Mammary epithelial cell (primary cell): ENCODE measurements at regions of chr11 and their contacts with region 1.

Region 1: DNA sequence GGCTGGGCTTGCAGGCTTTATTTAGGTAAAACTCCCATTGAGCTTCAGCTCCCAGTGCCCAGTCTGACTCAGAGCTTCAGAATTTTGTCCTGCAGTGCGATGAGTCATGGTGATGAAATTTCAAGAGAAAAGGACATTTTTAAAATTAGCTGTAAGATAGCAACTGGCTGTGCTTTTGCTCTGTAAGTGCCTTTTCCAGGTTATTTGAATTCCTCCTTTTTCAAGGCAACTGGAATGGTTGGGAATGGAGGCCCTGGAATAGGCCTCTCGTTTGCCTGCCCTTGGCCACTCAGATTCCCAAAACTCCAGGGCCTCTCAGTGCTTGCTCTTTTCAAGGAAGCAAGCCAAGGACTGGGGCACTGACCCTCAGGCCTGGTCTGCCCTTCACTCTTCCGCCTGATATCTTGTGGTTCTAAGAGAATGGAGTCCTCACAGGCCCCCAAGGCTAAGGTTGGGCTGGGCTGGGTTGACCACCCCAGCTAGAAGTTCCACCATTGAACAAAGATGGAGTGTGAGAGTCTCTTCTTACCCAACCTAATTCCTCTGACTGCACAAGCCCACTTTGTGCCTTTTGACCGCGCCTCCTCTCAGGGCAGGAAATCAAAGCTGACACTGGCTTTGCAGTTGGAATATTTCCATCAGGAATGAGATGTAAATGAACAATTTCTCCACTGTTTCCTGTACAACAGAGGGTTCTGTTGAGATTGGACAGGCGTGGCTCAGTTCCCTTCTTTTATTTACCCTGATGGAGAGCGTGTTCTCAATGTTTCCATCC is 59.4 kb upstream of the PRSS23 start:
- DNase-seq: peak; percentile 88
- H3K4me3 ChIP-seq: no peak overlapping the region
- H3K27ac ChIP-seq: peak overlapping the region; percentile 85
- H3K4me1 ChIP-seq: peaks cover 65% of the 10 kb centered on the region
- H3K27me3 ChIP-seq: no peaks in the 10 kb centered on the region
- CTCF ChIP-seq: no peak

Region 2: DNA sequence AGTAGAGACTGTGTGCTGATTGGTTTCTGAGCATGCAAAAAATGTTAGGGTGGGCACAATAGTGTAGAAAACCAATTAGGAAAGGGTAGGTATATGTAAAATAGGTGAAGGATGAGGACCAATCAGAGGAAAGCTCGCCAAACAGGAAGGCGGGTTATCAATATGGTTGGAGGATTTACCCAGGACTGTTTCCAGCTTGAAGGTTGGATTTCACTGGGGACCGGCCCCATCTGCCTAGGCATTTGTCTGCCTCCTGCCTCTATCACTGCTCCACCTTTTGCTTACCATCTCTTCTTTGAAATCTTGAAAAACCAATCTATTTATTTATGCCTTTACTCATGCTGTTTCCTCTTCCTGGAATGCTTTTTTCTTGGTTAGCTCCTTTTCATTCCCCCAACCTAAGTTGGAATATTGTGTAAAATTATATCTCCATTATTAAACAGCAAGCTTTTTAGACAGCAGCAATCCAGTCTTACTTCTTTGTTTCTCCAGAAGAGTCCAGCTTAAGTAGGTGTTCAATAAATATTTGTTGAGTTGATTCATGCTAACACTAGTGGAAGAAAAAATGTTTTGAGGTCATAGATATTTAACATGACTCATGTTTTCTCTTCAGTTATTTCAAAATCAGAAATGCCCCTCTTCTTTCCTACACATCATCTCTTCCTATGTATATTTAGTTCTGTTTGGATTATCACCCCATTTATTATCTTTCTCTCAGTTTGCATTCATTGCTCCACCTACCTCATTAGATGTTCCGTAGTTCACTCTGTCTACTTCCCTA is 865.6 kb before region 1 on chr11:
- CTCF ChIA-PET with region 1: no interaction called
- dilution Hi-C with region 1: no loop called
- in situ Hi-C with region 1: no loop called
- intact Hi-C with region 1: no loop called
- DNase-seq: peak; percentile 52
- H3K4me3 ChIP-seq: no peak overlapping the region
- H3K27ac ChIP-seq: no peak overlapping the region
- H3K4me1 ChIP-seq: peaks cover 8% of the 10 kb centered on the region
- H3K27me3 ChIP-seq: no peaks in the 10 kb centered on the region
- CTCF ChIP-seq: no peak

Region 3: DNA sequence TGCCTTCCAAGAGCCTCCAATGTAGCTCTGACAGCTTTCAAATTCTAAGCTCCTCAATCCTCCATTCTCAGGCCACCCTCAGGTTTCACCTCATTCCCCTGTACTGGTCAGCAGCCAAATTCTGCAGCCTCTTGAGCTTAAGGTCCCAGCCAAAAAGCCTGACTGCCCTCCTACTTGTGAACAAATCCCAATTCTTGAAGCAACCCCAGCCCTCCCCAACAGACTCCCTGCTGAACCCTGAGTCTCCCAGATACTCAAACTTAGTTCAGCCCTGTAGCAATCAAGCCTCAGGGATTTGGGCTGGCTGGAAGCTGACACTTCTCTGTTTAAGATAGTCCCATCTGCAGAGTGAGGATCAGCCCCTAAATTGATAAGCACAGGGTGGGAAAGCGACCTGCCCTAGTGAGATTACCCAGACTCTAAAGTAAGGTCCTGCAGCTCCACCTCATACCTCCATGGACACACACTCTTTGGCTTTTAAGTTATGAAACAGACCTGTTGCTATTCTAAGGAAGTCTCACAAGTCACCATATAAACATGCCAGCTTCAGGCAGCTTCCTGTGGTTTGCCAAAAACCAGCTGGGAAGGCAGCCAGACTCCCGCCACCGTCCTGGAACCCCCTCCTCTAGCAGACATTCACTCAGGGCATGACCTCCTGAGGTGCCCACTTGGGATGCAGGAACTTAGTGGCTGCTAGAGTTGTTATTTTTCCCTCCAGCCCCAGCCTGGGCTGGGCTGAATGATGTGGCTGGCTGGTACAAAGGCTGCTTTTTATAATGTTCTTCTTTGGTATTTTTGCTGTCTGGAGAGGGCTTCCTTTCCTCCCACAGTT is 589.5 kb before region 1 on chr11:
- CTCF ChIA-PET with region 1: no interaction called
- dilution Hi-C with region 1: no loop called
- in situ Hi-C with region 1: no loop called
- intact Hi-C with region 1: no loop called
- DNase-seq: no peak
- H3K4me3 ChIP-seq: peak overlapping the region in 1 of 3 experiments; percentile 13
- H3K27ac ChIP-seq: peak overlapping the region; percentile 90
- H3K4me1 ChIP-seq: peaks cover 54% of the 10 kb centered on the region
- H3K27me3 ChIP-seq: no peaks in the 10 kb centered on the region
- CTCF ChIP-seq: no peak

Region 4: GRCh38 chr11:86515297-86516094 is 225.4 kb before region 1 on chr11:
- CTCF ChIA-PET with region 1: no interaction called
- dilution Hi-C with region 1: no loop called
- in situ Hi-C with region 1: no loop called
- intact Hi-C with region 1: loop called (anchors 5 kb)
- DNase-seq: peak; percentile 97
- H3K4me3 ChIP-seq: no peak overlapping the region
- H3K27ac ChIP-seq: peak overlapping the region; percentile 24
- H3K4me1 ChIP-seq: peaks cover 35% of the 10 kb centered on the region
- H3K27me3 ChIP-seq: no peaks in the 10 kb centered on the region
- CTCF ChIP-seq: no peak

Region 5: GRCh38 chr11:86620891-86621521 is 119.9 kb before region 1 on chr11:
- CTCF ChIA-PET with region 1: no interaction called
- dilution Hi-C with region 1: no loop called
- in situ Hi-C with region 1: no loop called
- intact Hi-C with region 1: loop called (anchors 1 kb)
- DNase-seq: no peak
- H3K4me3 ChIP-seq: no peak overlapping the region
- H3K27ac ChIP-seq: no peak overlapping the region
- H3K4me1 ChIP-seq: peaks cover 14% of the 10 kb centered on the region
- H3K27me3 ChIP-seq: no peaks in the 10 kb centered on the region
- CTCF ChIP-seq: no peak

Region 6: DNA sequence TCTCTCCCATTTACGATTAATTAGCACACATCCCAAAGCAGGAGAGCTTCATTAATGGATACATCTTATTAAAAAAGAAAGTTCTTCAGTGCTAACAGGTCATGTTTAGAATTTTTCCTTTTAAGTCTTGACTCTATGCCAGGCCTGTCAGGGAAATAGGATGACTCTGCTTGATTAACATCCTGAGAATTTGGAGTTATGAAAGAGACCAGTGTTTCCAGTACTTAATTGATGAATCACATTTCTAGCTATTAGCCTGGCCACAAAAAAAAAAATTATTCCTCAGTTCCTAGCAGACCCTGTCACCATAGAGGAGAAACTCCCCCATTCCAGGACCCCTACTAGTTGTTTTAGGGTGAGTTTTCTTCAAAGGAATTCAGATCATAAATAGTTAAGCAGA is 44.9 kb before region 1 on chr11:
- CTCF ChIA-PET with region 1: no interaction called
- dilution Hi-C with region 1: no loop called
- in situ Hi-C with region 1: no loop called
- intact Hi-C with region 1: loop called (anchors 1 kb)
- DNase-seq: peak; percentile 86
- H3K4me3 ChIP-seq: no peak overlapping the region
- H3K27ac ChIP-seq: peak overlapping the region; percentile 64
- H3K4me1 ChIP-seq: peaks cover 49% of the 10 kb centered on the region
- H3K27me3 ChIP-seq: no peaks in the 10 kb centered on the region
- CTCF ChIP-seq: no peak

Region 7: GRCh38 chr11:86784241-86784681 is 43.4 kb after region 1 on chr11:
- CTCF ChIA-PET with region 1: no interaction called
- dilution Hi-C with region 1: no loop called
- in situ Hi-C with region 1: no loop called
- intact Hi-C with region 1: loop called (anchors 1 kb)
- DNase-seq: no peak
- H3K4me3 ChIP-seq: no peak overlapping the region
- H3K27ac ChIP-seq: no peak overlapping the region
- H3K4me1 ChIP-seq: no peaks in the 10 kb centered on the region
- H3K27me3 ChIP-seq: no peaks in the 10 kb centered on the region
- CTCF ChIP-seq: no peak

Region 8: DNA sequence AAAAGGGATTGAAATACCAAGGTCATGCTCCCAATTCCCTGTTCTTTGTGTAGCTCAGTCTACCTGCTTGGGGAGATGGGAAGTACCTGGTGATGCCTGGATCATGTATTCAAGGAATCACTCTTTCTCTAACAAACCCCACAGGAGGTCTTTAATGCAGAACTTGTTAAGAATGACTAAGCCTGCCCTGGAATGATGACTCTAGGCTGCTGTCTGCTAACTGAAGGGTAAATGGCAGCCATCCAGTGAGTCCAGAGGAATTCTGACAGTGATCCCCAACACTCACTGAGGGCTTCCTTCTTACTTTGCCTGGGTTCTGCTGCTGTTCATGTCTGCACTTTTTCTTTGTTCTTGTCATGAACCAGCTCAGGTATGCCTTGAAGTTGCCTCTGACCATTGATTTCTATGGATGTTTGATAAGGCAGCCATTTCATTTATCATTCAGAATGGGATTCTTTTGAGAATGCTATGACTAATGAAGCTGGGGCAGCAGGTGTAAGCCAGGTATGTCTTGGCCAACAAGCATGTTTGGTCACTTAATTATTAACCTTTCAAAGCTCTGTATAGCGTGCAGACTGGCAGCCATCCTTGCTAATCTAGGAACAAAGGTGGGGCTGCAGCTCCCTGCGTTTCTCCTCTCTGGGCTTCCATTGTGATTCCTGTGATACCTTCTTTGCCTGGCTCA is 70.9 kb after region 1 on chr11:
- CTCF ChIA-PET with region 1: no interaction called
- dilution Hi-C with region 1: no loop called
- in situ Hi-C with region 1: no loop called
- intact Hi-C with region 1: loop called (anchors 2 kb)
- DNase-seq: peak; percentile 60
- H3K4me3 ChIP-seq: no peak overlapping the region
- H3K27ac ChIP-seq: no peak overlapping the region
- H3K4me1 ChIP-seq: peaks cover 39% of the 10 kb centered on the region
- H3K27me3 ChIP-seq: no peaks in the 10 kb centered on the region
- CTCF ChIP-seq: no peak